GM12878 (cell line): ENCODE measurements at regions of chr19 and their contacts with region 1.

Region 1: GRCh38 chr19:40416918-40417642 is 3.9 kb upstream of the PRX start:
- DNase-seq: no peak
- ATAC-seq: peak; percentile 27
- H3K4me3 ChIP-seq: no peak overlapping the region
- H3K27ac ChIP-seq: peak overlapping the region; percentile 80
- H3K4me1 ChIP-seq: peaks cover 22% of the 10 kb centered on the region
- H3K27me3 ChIP-seq: no peaks in the 10 kb centered on the region
- CTCF ChIP-seq: no peak
- EP300 ChIP-seq: peak; percentile 36 to 60; a peak in 3 of 4 replicates
- POLR2A ChIP-seq: peak; percentile 41; the same call in 1 of the 2 replicates
- RAD21 ChIP-seq: no peak

Region 2: GRCh38 chr19:40358773-40359172 is 58.3 kb before region 1 on chr19:
- CTCF ChIA-PET with region 1: interaction called, 8 read pairs
- POLR2A ChIA-PET with region 1: no interaction called
- RAD21 ChIA-PET with region 1: interaction called, 4 read pairs
- SMC1A ChIA-PET with region 1: interaction called, 4 read pairs
- in situ Hi-C with region 1: no loop called
- intact Hi-C with region 1: loop called (anchors 5 kb)
- DNase-seq: peak; percentile 76
- ATAC-seq: peak; percentile 88
- H3K4me3 ChIP-seq: no peak overlapping the region
- H3K27ac ChIP-seq: peak overlapping the region; percentile 52
- H3K4me1 ChIP-seq: peaks cover 40% of the 10 kb centered on the region
- H3K27me3 ChIP-seq: no peaks in the 10 kb centered on the region
- CTCF ChIP-seq: no peak
- EP300 ChIP-seq: peak; percentile 38 to 70; a peak in 3 of 4 replicates
- POLR2A ChIP-seq: no peak
- RAD21 ChIP-seq: no peak

Region 3: DNA sequence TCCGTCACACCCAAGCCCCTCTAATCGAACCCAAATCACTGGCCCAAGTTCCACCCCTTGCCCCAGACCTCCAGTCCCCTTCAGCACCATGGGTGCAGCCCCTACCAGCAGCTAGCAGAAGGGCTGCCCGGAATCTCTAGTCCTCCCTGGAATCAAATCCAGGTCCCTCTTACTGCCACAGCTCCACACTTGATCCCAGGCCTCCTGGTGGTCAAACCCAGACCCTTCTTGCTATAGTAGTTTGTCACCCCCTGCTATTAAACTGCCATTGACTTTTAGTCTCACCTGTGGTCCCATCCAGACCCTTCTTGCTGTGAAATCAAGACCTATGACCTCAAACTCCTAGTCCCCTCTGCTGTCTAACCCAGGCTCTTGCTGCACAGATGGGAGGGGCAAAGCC is 35.8 kb before region 1 on chr19:
- CTCF ChIA-PET with region 1: interaction called, 3 read pairs
- POLR2A ChIA-PET with region 1: interaction called, 17 read pairs
- RAD21 ChIA-PET with region 1: no interaction called
- SMC1A ChIA-PET with region 1: no interaction called
- in situ Hi-C with region 1: no loop called
- intact Hi-C with region 1: no loop called
- DNase-seq: no peak
- ATAC-seq: no peak
- H3K4me3 ChIP-seq: no peak overlapping the region
- H3K27ac ChIP-seq: no peak overlapping the region
- H3K4me1 ChIP-seq: no peaks in the 10 kb centered on the region
- H3K27me3 ChIP-seq: no peaks in the 10 kb centered on the region
- CTCF ChIP-seq: no peak
- EP300 ChIP-seq: no peak
- POLR2A ChIP-seq: no peak
- RAD21 ChIP-seq: no peak

Region 4: GRCh38 chr19:40444192-40445028 is 27.3 kb after region 1 on chr19 and contains the start of gene SERTAD3:
- CTCF ChIA-PET with region 1: interaction called, 40 read pairs
- POLR2A ChIA-PET with region 1: interaction called, 55 read pairs
- RAD21 ChIA-PET with region 1: interaction called, 35 read pairs
- SMC1A ChIA-PET with region 1: interaction called, 35 read pairs
- in situ Hi-C with region 1: no loop called
- intact Hi-C with region 1: loop called (anchors 1 kb)
- DNase-seq: peak; percentile 76
- ATAC-seq: peak; percentile 88
- H3K4me3 ChIP-seq: peak within 1 kb of the TSS; percentile 88
- H3K27ac ChIP-seq: peak within 1 kb of the TSS; percentile 94
- H3K4me1 ChIP-seq: peaks cover 5% of the 10 kb centered on the region
- H3K27me3 ChIP-seq: no peaks in the 10 kb centered on the region
- CTCF ChIP-seq: peak; percentile 25 to 60 (median 52); a peak in 4 of 6 replicates
- EP300 ChIP-seq: peak in 1 of 2 experiments; percentile 38; a peak in 1 of 4 replicates
- POLR2A ChIP-seq: peak; percentile 97
- RAD21 ChIP-seq: peak; percentile 65
- polyA plus RNA-seq, gene SERTAD3: 4.2 to 8.4 TPM